ENCODE measurements at regions of chr4 and their contacts with region 1.

Region 1: GRCh38 chr4:1763550-1764080 is 29.5 kb upstream of the FGFR3 start:
- DNase-seq: no peak
- ATAC-seq: peak; percentile 6 to 39 (median 19)
- H3K4me3 ChIP-seq: no peak overlapping the region
- H3K27ac ChIP-seq: peak overlapping the region in 3 of 4 donors; percentile 7 to 13 (median 12)
- H3K4me1 ChIP-seq: peaks cover 0 to 2% (median 0%) of the 10 kb centered on the region in 3 donors
- H3K27me3 ChIP-seq: no peaks in the 10 kb centered on the region
- CTCF ChIP-seq: peak in 1 of 4 donors; percentile 6

Region 2: GRCh38 chr4:1683736-1684505 is 79.7 kb before region 1 on chr4 and contains the start of gene FAM53A:
- intact Hi-C with region 1: no loop called
- DNase-seq: peak in 5 of 6 donors; percentile 88 to 99 (median 94)
- ATAC-seq: peak; percentile 92 to 96 (median 94)
- H3K4me3 ChIP-seq: peak within 1 kb of the TSS; percentile 47 to 77 (median 55)
- H3K27ac ChIP-seq: peak within 1 kb of the TSS; percentile 46 to 61 (median 55)
- H3K4me1 ChIP-seq: no peaks in the 10 kb centered on the region
- H3K27me3 ChIP-seq: no peaks in the 10 kb centered on the region
- CTCF ChIP-seq: no peak
- total RNA-seq, gene FAM53A: 0.60 to 1.4 (median 1.2) TPM

Region 3: GRCh38 chr4:1802151-1802715 is 38.6 kb after region 1 on chr4:
- intact Hi-C with region 1: loop called in 1 of 3 experiments (anchors 5 kb)
- DNase-seq: peak in 1 of 6 donors; percentile 72
- ATAC-seq: no peak
- H3K4me3 ChIP-seq: no peak overlapping the region
- H3K27ac ChIP-seq: no peak overlapping the region
- H3K4me1 ChIP-seq: no peaks in the 10 kb centered on the region
- H3K27me3 ChIP-seq: no peaks in the 10 kb centered on the region
- CTCF ChIP-seq: no peak

Measured in pancreas (tissue), 10 donors.